GM18951 (cell line): ENCODE measurements at regions of chr17 and their contacts with region 1.

Region 1: GRCh38 chr17:8745586-8746500 is 1.2 kb upstream of the CCDC42 start:
- POLR2A ChIP-seq: no peak

Region 2: GRCh38 chr17:8409966-8410864 is 335.6 kb before region 1 on chr17:
- in situ Hi-C with region 1: loop called (anchors 10 kb)
- POLR2A ChIP-seq: no peak

Region 3: DNA sequence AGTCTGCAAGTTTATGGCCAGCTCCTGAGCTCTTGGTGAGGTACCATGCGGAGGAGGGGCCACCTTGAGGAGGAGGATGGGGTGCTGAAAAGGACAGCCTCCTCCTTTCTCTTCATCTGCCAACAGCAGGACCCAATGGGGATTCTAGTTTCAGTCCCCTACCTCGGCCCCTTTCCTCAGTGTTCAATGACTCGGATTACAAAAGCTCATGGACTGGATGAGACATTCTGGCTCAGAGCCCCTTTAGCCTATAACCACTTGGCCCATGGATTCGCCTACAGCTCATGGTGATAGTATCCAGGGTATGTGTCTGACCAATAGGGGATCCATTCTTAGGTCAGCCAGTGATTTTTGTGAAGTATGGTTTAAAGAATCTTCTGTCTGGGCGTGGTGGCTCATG is 130.1 kb after region 1 on chr17:
- in situ Hi-C with region 1: no loop called
- POLR2A ChIP-seq: no peak